ENCODE measurements at regions of chr3 and their contacts with region 1.

Region 1: GRCh38 chr3:38521391-38521987 is 25.3 kb downstream of the EXOG start:
- DNase-seq: peak; percentile 69
- H3K4me3 Mint-ChIP-seq: no peak overlapping the region
- H3K27ac Mint-ChIP-seq: no peak overlapping the region
- H3K4me1 Mint-ChIP-seq: peaks cover 26% of the 10 kb centered on the region
- H3K27me3 Mint-ChIP-seq: no peaks in the 10 kb centered on the region

Region 2: DNA sequence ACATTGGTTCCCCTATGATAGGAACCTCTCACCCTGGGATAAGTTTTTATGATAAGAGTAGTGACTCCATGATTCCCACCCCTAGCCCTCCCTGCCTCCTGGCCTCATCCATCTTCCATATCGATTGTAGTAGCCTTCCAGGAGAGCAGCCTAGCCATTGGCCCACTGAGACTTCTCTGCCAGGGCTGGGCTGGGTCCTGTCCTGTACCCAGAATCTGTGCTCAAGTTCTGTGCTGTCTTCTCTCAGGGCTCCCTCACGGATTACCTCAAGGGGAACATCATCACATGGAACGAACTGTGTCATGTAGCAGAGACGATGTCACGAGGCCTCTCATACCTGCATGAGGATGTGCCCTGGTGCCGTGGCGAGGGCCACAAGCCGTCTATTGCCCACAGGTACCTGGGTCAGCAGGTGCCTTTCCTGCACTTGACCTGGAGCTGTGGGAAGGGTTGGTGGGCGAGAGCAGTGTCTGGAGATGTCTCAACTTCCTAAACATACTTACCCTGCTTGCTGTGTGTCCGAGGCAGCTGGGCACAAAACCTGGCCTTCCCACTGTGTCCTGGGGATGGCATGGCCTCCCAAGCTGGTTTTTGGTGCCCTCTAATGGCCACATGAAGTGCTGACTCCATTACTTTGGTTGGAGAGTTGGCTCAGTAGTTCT is 41.9 kb before region 1 on chr3:
- CTCF ChIA-PET with region 1: interaction called, 13 read pairs
- POLR2A ChIA-PET with region 1: no interaction called
- DNase-seq: peak; percentile 58
- H3K4me3 Mint-ChIP-seq: no peak overlapping the region
- H3K27ac Mint-ChIP-seq: no peak overlapping the region
- H3K4me1 Mint-ChIP-seq: no peaks in the 10 kb centered on the region
- H3K27me3 Mint-ChIP-seq: no peaks in the 10 kb centered on the region

Region 3: DNA sequence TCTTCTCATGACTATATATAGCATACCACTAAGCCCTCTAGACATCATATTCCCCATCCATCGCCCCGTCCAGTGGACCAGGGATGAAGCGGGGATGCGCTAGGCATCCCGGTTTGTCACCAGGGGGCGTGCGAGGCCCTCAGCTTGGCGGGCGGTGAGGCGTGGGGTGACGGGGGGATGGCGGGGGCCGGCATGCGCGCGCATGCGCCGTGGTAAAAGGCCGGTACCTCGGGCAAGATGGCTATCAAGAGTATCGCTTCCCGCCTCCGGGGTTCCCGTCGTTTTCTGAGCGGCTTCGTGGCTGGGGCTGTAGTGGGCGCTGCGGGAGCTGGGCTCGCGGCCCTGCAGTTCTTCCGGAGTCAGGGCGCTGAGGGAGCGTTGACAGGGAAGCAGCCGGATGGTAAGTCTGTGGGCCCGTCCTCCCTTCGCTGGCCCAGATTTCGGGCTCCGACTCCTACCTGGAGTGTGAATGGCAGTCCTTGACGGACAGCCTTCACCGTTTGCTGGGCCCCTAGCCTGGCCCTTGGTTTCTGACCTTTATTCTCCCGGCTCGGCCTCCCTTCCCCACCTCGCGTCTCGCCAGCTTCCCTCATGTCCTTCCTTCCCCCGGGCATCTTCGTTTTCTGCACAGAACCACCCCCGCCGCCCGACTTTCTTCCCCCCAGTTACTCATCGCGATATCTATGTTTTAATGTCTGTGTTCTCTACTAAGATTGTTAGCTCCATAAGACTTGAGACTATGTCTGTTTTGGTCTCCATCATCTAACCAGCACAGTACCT is 25.2 kb before region 1 on chr3 and contains the start of gene EXOG:
- CTCF ChIA-PET with region 1: interaction called, 36 read pairs
- POLR2A ChIA-PET with region 1: interaction called, 4 read pairs
- DNase-seq: peak; percentile 95
- H3K4me3 Mint-ChIP-seq: peak within 1 kb of the TSS; percentile 94
- H3K27ac Mint-ChIP-seq: peak within 1 kb of the TSS; percentile 79
- H3K4me1 Mint-ChIP-seq: peaks cover 30% of the 10 kb centered on the region
- H3K27me3 Mint-ChIP-seq: no peaks in the 10 kb centered on the region
- total RNA-seq, gene EXOG: 17.8 to 19.0 TPM

Region 4: GRCh38 chr3:38507120-38507519 is 14.4 kb before region 1 on chr3:
- CTCF ChIA-PET with region 1: interaction called, 28 read pairs
- POLR2A ChIA-PET with region 1: interaction called, 4 read pairs
- DNase-seq: no peak
- H3K4me3 Mint-ChIP-seq: no peak overlapping the region
- H3K27ac Mint-ChIP-seq: no peak overlapping the region
- H3K4me1 Mint-ChIP-seq: no peaks in the 10 kb centered on the region
- H3K27me3 Mint-ChIP-seq: no peaks in the 10 kb centered on the region

Region 5: DNA sequence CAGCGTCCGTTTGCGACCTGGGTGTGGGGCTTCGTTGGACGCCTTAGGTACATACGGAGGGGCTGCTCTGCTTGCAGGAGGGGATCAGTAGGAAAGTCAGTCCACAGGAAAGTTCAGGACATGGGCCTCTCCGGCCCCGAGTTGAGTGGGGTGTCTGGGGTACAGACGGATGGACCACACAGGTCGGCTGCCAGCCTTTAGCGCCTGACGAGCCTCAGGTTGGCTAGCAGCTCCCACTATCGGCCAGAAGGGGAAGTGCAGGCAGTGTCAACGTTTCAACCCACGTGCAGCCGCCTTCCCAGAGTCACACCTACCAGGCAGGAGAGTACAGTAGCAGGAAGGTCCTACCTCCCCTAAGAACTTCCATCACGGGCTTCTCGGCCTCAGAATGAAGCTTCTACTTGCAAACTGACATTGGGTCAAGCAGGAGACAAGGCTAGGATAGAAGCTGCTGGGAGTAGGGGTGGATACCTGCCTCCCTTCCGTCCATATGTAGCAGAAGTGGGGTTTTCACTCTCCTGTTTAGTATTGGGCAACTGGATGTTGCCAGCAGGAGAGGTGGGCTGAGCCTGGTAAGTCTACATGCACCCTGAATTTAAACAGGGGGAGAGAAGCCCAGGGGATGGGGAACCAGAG is 129.8 kb after region 1 on chr3:
- CTCF ChIA-PET with region 1: interaction called, 52 read pairs
- POLR2A ChIA-PET with region 1: interaction called, 3 read pairs
- DNase-seq: peak; percentile 73
- H3K4me3 Mint-ChIP-seq: no peak overlapping the region
- H3K27ac Mint-ChIP-seq: no peak overlapping the region
- H3K4me1 Mint-ChIP-seq: peaks cover 7% of the 10 kb centered on the region
- H3K27me3 Mint-ChIP-seq: peaks cover 19% of the 10 kb centered on the region

Region 6: DNA sequence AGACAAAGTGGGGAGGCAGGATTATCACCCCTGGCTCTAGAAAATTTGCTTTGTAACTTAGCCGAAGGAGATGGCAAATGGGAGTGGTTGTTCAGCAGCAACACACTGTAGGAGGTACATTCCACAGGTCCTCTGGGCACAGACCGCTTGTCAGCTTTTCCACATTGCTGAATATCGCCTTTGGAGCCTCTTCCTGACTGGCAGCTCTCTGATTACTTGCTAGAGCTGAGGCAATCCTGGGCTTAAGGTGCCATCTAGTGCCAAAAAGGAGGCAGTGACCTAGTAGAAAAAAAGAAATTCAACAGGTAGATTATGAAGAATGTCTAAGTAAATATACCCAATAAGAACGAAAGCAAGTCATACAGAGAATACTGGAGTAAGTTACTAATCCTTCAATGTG is 141.1 kb after region 1 on chr3:
- CTCF ChIA-PET with region 1: interaction called, 21 read pairs
- POLR2A ChIA-PET with region 1: no interaction called
- DNase-seq: no peak
- H3K4me3 Mint-ChIP-seq: no peak overlapping the region
- H3K27ac Mint-ChIP-seq: no peak overlapping the region
- H3K4me1 Mint-ChIP-seq: no peaks in the 10 kb centered on the region
- H3K27me3 Mint-ChIP-seq: peaks cover 40% of the 10 kb centered on the region

Region 7: GRCh38 chr3:39000008-39000450 is 478.5 kb after region 1 on chr3:
- CTCF ChIA-PET with region 1: interaction called, 18 read pairs
- POLR2A ChIA-PET with region 1: no interaction called
- DNase-seq: no peak
- H3K4me3 Mint-ChIP-seq: no peak overlapping the region
- H3K27ac Mint-ChIP-seq: no peak overlapping the region
- H3K4me1 Mint-ChIP-seq: no peaks in the 10 kb centered on the region
- H3K27me3 Mint-ChIP-seq: peaks cover 13% of the 10 kb centered on the region